MCF 10A (cell line): ENCODE measurements at regions of chr6 and their contacts with region 1.

Region 1: GRCh38 chr6:13614926-13615798 is at the start of gene NOL7:
- DNase-seq: peak; percentile 97
- H3K4me3 Mint-ChIP-seq: peak within 1 kb of the TSS; percentile 99
- H3K27ac Mint-ChIP-seq: peak within 1 kb of the TSS; percentile 98
- H3K4me1 Mint-ChIP-seq: peaks cover 9% of the 10 kb centered on the region
- H3K27me3 Mint-ChIP-seq: no peaks in the 10 kb centered on the region
- CTCF ChIP-seq: peak; percentile 72
- total RNA-seq, gene NOL7: 75.2 and 98.5 TPM in 2 replicates

Region 2: GRCh38 chr6:13336553-13336952 is 278.6 kb before region 1 on chr6:
- CTCF ChIA-PET with region 1: interaction called, 4 read pairs
- POLR2A ChIA-PET with region 1: interaction called, 4 read pairs
- intact Hi-C with region 1: loop called (anchors 1 kb)
- DNase-seq: peak; percentile 81
- H3K4me3 Mint-ChIP-seq: no peak overlapping the region
- H3K27ac Mint-ChIP-seq: no peak overlapping the region
- H3K4me1 Mint-ChIP-seq: peaks cover 5% of the 10 kb centered on the region
- H3K27me3 Mint-ChIP-seq: no peaks in the 10 kb centered on the region
- CTCF ChIP-seq: peak; percentile 90

Region 3: GRCh38 chr6:13487122-13488014 is 127.8 kb before region 1 on chr6 and contains the start of gene GFOD1:
- CTCF ChIA-PET with region 1: no interaction called
- POLR2A ChIA-PET with region 1: interaction called, 53 read pairs
- intact Hi-C with region 1: no loop called
- DNase-seq: peak; percentile 88
- H3K4me3 Mint-ChIP-seq: peak within 1 kb of the TSS; percentile 78
- H3K27ac Mint-ChIP-seq: peak within 1 kb of the TSS; percentile 50
- H3K4me1 Mint-ChIP-seq: peaks cover 23% of the 10 kb centered on the region
- H3K27me3 Mint-ChIP-seq: no peaks in the 10 kb centered on the region
- CTCF ChIP-seq: peak; percentile 23
- total RNA-seq, gene GFOD1: 7.1 and 9.5 TPM in 2 replicates

Region 4: DNA sequence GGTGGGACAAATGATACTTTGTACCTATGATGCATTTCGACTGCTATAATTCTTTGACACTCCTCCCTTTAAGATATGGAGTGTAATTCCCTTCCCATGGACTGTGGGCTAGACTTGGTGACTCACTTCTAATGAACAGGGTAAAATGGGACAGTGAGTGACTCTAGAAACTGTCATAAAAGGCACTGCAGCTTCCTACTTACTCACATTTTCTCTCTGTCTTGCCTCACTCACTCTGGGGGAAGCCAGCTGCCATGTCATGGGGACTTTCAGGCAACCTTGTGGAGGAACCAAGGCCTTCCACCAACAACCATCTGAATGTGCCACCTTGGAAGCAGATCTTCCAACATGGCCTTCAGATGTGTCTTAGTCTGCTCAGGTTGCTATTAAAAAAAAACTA is 114.9 kb before region 1 on chr6:
- CTCF ChIA-PET with region 1: no interaction called
- POLR2A ChIA-PET with region 1: no interaction called
- intact Hi-C with region 1: no loop called
- DNase-seq: no peak
- H3K4me3 Mint-ChIP-seq: no peak overlapping the region
- H3K27ac Mint-ChIP-seq: no peak overlapping the region
- H3K4me1 Mint-ChIP-seq: peaks cover 6% of the 10 kb centered on the region
- H3K27me3 Mint-ChIP-seq: no peaks in the 10 kb centered on the region
- CTCF ChIP-seq: no peak

Region 5: GRCh38 chr6:13604546-13605416 is 10.4 kb before region 1 on chr6:
- CTCF ChIA-PET with region 1: interaction called, 11 read pairs
- POLR2A ChIA-PET with region 1: interaction called, 4 read pairs
- intact Hi-C with region 1: no loop called
- DNase-seq: no peak
- H3K4me3 Mint-ChIP-seq: no peak overlapping the region
- H3K27ac Mint-ChIP-seq: no peak overlapping the region
- H3K4me1 Mint-ChIP-seq: no peaks in the 10 kb centered on the region
- H3K27me3 Mint-ChIP-seq: no peaks in the 10 kb centered on the region
- CTCF ChIP-seq: no peak

Region 6: GRCh38 chr6:13711733-13712598 is 96.8 kb after region 1 on chr6 and contains the start of gene RANBP9:
- CTCF ChIA-PET with region 1: interaction called, 6 read pairs
- POLR2A ChIA-PET with region 1: interaction called, 109 read pairs
- intact Hi-C with region 1: loop called (anchors 2 kb)
- DNase-seq: peak; percentile 82
- H3K4me3 Mint-ChIP-seq: peak within 1 kb of the TSS; percentile 99
- H3K27ac Mint-ChIP-seq: peak within 1 kb of the TSS; percentile 93
- H3K4me1 Mint-ChIP-seq: peaks cover 24% of the 10 kb centered on the region
- H3K27me3 Mint-ChIP-seq: no peaks in the 10 kb centered on the region
- CTCF ChIP-seq: no peak
- total RNA-seq, gene RANBP9: 42.0 and 48.0 TPM in 2 replicates

Region 7: DNA sequence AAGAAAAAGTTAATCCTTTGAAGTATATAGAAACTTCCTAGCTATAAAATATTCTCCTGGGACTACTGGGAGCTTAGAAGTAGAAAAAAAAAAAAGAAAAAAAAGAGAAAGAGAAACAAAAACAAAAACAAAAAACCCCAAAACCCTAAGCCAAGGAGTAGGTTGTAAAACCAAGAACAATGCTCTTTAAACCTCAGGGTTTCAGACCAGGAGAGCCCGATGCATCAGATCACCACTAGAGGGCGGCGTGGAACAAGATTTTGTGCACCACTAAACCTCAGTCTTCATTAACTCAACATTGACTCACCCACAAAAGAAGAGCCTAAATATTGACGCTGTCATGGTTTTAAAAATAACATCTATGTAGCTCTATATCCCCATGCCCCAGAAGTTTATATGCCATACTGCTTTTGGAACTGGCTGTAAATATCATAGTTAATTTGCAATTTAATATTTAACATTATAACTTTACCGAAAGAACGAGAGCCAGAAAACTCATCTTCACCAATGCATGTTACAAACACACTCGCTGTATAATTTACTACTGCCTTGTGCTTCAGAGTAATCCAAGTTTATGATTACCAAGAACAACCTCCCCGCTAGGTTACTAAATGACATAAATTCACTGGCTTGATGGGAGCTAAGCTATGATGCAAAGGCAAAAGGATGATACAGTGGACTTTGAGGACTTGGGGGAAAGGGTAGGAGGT is 180.0 kb after region 1 on chr6:
- CTCF ChIA-PET with region 1: no interaction called
- POLR2A ChIA-PET with region 1: interaction called, 5 read pairs
- intact Hi-C with region 1: loop called (anchors 10 kb)
- DNase-seq: peak; percentile 87
- H3K4me3 Mint-ChIP-seq: no peak overlapping the region
- H3K27ac Mint-ChIP-seq: no peak overlapping the region
- H3K4me1 Mint-ChIP-seq: peaks cover 5% of the 10 kb centered on the region
- H3K27me3 Mint-ChIP-seq: no peaks in the 10 kb centered on the region
- CTCF ChIP-seq: peak; percentile 83